Posterior cingulate gyrus (tissue), 11 donors: ENCODE measurements at regions of chr16 and their contacts with region 1.

Region 1: DNA sequence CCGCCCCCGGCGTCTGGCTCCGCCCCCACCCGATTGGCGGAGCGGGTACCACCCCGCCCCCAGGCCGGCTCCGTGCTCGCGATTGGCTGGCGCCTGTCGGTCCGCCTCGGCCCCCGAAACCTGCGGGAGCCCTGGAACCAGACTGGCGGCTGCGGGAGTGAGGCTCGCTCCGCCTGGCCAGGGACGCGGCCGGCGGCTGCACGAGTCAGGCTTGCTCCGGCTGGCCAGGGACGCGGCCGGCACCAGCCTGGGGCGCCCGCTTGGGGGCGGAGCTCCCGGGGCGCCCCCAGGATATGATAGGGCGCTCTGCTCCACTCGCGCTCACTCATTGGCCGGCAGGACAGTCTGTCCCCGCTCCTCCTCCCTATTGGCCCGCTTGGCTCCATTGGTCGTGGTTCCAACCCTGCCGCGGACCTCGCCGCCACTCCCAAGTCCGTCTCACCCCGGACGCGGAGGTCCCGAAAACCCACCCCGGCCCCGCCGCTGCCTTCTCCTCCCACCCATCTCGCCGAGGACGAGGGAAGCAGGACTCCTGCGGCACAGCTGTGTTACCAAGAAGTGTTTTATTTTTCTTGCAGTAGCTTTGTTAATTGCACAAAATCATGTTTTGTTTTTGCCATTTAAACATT is 340 bp upstream of the ROGDI start:
- DNase-seq: peak; percentile 89 to 99 (median 93)

Region 2: DNA sequence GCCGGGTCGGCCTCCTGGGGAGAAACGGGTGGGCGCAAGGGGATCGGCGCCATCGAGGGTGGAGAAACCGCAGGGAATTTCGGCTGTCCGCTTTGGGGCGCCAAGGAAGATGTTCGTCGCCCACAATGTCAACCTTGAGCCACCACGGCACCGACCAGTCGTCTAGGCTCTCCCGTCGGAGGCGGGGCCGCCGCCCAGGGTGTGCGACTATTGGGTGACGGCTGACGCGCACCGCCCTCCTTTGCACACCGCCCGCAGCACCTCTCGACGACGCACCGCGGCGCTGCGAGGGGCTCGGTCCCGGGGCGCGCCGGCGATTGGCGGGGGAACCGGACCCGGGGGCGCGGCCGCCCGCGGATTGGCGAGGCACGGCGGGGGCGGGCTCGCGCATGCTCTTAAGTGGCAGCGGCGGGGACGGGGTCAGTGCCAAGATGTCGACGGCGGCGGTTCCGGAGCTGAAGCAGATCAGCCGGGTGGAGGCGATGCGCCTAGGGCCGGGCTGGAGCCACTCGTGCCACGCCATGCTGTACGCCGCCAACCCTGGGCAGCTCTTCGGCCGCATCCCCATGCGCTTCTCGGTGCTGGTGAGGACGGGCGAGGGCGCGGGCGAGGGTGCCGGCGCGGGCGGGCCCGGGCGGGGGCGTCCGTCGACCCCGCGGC is 109.3 kb before region 1 on chr16 and contains the start of gene NUDT16L1:
- intact Hi-C with region 1: loop called (anchors 5 kb)
- DNase-seq: peak; percentile 89 to 100 (median 96)

Region 3: DNA sequence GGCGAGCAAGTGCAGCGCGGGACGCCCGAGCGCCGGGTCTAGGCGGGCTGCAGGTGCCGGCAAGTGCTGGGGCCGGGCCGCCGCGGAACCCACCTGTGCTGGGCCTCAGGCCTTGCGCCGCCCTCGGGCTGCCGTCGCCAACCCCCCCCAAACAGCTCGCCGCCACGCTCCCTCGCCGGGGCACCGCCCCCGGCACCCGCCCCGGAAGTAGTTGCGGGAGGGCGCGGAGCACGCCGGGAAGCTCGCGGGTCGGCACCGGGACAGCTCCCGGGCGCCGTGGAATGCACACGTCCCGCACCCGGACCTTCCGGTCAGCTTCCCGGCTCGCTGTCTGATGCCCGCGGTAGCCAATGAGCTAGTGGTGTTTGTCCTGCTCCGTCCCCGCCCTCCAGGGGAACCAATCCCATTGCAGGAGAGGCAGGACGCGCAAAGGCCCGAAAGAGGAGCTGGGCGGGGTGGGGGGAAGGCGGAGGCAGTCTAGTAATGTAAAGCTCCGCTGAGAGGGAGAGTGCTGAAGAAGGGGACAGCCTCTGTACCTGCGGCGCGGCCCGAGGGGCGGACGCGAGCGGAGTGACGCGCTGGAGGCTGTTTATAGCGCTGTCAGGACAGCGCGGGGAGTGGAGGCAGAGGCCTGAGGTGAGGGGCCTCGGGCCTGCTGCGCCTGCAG is 68.6 kb before region 1 on chr16 and contains the starts of genes ANKS3 and DNAAF8:
- intact Hi-C with region 1: loop called (anchors 1 kb)
- DNase-seq: peak; percentile 93 to 100 (median 96)

Region 4: GRCh38 chr16:4766874-4767628 is 35.7 kb before region 1 on chr16 and contains the start of gene ZNF500:
- intact Hi-C with region 1: loop called (anchors 1 kb)
- DNase-seq: peak; percentile 97 to 100 (median 99)

Region 5: GRCh38 chr16:4846891-4847773 is 44.4 kb after region 1 on chr16 and contains the starts of genes GLYR1 and UBN1:
- intact Hi-C with region 1: loop called (anchors 2 kb)
- DNase-seq: peak; percentile 98 to 100 (median 98)

Region 6: DNA sequence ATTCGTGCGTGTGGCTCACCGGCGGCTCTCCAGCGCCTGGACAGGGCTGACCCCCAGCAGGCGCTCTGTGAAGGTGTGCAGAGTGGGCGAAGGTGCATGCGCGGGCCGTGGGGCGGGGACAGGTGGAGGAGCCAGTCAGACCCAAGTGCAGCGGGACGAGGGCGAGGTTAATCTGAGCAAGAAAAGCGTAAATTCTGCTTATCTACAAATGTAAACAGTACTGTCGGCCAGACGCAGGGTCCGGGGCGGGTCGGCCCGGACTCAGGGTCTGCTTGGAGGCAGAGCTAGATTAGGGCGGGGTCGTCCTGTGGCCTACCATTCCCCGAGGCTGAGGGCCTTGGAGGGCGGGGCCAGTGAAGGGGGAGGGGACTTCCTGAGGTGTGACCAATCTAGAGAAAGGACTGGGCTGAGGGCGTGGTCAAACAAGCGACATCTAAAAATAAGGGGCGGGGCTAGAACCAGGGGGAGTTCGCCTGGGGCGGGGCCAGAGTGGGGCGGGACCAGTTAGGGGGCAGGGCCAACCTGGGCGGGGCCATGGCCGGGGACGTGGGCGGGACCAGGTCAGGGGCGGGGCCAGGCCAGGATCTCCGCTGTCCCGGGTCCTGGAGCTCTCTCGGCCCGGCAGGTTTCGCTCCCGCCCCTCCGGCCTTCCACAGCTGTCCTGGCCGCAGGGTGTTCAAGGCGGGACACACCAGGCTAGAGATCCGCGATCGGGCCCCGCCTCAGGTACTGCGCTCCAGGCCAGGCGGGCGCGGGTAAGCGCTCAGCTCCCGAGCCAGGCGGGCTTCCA is 155.1 kb after region 1 on chr16 and contains the start of gene SEC14L5:
- intact Hi-C with region 1: loop called (anchors 5 kb)
- DNase-seq: peak; percentile 93 to 100 (median 98)